Panc1 (cell line): ENCODE measurements at regions of chr9 and their contacts with region 1.

Region 1: GRCh38 chr9:112043423-112043822 is 131.7 kb downstream of the SUSD1 start:
- DNase-seq: no peak
- ATAC-seq: no peak
- H3K4me3 ChIP-seq: no peak overlapping the region
- H3K27ac ChIP-seq: peak overlapping the region; percentile 91
- H3K4me1 ChIP-seq: peaks cover 9% of the 10 kb centered on the region
- H3K27me3 ChIP-seq: no peaks in the 10 kb centered on the region
- CTCF ChIP-seq: no peak

Region 2: DNA sequence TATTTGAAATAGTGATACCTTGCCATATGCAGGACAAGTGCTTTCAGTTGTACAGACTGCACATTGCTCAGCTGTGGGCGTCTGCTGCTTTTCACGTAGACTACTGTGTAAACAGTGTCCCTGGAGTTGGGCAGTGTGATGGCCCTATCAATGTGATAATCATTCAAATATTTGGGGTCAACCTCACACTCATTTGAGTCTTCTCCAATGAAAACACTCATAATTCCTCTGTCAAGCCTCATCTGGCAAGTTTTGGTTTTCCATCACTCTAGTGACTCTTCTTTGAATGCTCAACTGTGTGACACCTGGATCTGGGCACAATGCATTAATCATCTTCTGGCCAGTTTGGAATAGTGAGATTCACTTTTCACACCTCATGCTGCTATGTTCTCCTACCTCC is 82.4 kb before region 1 on chr9:
- CTCF ChIA-PET with region 1: interaction called, 10 read pairs
- POLR2A ChIA-PET with region 1: no interaction called
- in situ Hi-C with region 1: no loop called
- intact Hi-C with region 1: no loop called
- DNase-seq: no peak
- ATAC-seq: peak; percentile 64
- H3K4me3 ChIP-seq: no peak overlapping the region
- H3K27ac ChIP-seq: peak overlapping the region; percentile 82
- H3K4me1 ChIP-seq: peaks cover 35% of the 10 kb centered on the region
- H3K27me3 ChIP-seq: no peaks in the 10 kb centered on the region
- CTCF ChIP-seq: no peak

Region 3: DNA sequence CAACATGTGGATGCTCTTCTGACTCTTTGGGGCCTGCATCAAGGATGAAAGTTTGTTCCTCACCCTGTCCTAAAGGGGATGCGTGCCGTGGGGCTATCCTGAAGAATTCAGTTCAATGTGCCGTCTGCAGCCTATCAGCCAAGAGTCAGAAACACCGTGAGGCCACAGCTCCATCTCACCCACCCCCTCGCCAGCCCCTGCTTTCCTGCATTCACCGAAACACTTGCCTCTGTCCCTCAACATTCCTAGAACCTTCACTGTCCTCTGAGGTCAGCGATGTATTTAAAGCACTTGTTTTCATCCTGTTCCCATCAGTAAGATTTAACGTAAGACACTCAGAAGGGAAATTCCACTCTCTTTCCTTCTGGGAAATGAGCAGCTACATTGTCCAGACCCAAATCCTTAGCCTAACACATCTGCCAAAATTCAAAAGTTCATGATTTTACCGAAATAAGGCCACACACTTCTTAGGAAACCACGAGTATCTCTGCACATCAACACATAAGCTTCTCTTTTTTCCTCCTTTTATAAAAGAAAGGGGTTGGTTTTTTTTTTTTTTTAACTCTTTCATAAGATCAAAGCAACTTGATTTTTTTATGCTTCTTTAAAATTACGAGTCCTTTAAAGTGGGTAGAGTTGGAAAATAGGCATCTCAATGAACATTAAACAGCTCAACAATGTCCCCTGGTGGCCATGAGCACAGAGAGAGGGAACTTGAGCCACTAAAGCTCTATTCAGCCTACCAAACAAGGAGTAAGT is 31.0 kb after region 1 on chr9:
- CTCF ChIA-PET with region 1: no interaction called
- POLR2A ChIA-PET with region 1: no interaction called
- in situ Hi-C with region 1: no loop called
- intact Hi-C with region 1: no loop called
- DNase-seq: peak; percentile 82
- ATAC-seq: peak; percentile 88
- H3K4me3 ChIP-seq: no peak overlapping the region
- H3K27ac ChIP-seq: peak overlapping the region; percentile 91
- H3K4me1 ChIP-seq: peaks cover 16% of the 10 kb centered on the region; the same call in 1 of the 2 replicates
- H3K27me3 ChIP-seq: no peaks in the 10 kb centered on the region
- CTCF ChIP-seq: peak; percentile 87